Activated CD4-positive, alpha-beta memory T cell treated with anti-CD3 and anti-CD28 coated beads for 36 hours (primary cell): ENCODE measurements at regions of chr7 and their contacts with region 1.

Region 1: DNA sequence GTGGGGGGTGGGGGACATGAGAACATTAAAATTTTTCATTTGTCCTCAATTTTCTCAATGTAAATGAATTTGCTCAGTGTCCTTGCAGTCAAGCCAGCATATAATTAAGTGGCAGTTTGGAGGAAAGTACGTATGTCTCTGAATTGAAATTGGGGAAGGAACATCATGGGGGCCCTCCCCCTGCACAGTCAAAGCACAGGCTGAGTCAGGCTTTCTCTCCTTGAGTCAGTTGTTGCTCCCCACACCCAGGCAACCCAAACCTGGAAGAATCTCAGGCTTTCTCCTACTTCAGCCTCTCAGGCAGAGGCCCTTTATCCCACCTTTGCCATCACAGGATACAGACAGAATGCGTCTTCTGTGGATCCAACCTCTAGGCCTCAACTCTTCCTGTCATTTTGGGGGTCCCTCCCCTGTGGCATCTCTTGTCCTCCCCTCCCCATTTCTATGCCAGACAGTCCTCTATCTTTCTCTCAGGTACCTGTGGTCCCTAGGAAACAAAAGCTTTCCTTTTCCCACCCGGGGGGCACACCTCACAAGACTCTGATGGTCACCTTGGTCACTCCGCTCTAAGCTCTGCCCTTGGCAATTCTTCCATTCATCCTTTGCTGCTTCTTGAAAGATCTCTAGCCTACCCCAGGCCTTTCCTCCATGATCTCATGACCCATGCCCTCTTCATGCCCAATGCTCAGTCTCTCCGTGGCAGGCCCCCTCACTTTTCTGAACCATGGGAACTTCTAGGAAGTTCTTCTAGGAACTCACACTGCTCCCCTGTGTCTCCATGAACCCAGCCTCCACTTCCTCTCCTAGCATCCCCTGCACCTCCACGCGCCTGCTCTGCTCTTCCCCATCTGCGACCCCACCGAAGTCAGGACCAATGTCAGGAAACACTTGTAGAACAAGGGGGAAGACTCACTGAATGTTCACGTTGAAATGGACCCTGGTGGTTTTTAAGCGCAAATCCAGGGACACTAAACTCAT is 40.4 kb downstream of the CREB3L2 start:
- DNase-seq: peak; percentile 71
- H3K4me3 Mint-ChIP-seq: no peak overlapping the region
- H3K27ac Mint-ChIP-seq: no peak overlapping the region
- H3K4me1 Mint-ChIP-seq: peaks cover 23% of the 10 kb centered on the region
- H3K27me3 Mint-ChIP-seq: no peaks in the 10 kb centered on the region

Region 2: GRCh38 chr7:137923380-137923779 is 38.1 kb before region 1 on chr7:
- CTCF ChIA-PET with region 1: no interaction called
- POLR2A ChIA-PET with region 1: no interaction called
- intact Hi-C with region 1: loop called (anchors 1 kb)
- DNase-seq: peak; percentile 36
- H3K4me3 Mint-ChIP-seq: no peak overlapping the region
- H3K27ac Mint-ChIP-seq: peak overlapping the region; percentile 49
- H3K4me1 Mint-ChIP-seq: peaks cover 38% of the 10 kb centered on the region
- H3K27me3 Mint-ChIP-seq: no peaks in the 10 kb centered on the region

Region 3: GRCh38 chr7:137975221-137975620 is 13.7 kb after region 1 on chr7:
- CTCF ChIA-PET with region 1: no interaction called
- POLR2A ChIA-PET with region 1: no interaction called
- intact Hi-C with region 1: no loop called
- DNase-seq: no peak
- H3K4me3 Mint-ChIP-seq: no peak overlapping the region
- H3K27ac Mint-ChIP-seq: no peak overlapping the region
- H3K4me1 Mint-ChIP-seq: peaks cover 2% of the 10 kb centered on the region
- H3K27me3 Mint-ChIP-seq: no peaks in the 10 kb centered on the region